ENCODE measurements at regions of chr3 and their contacts with region 1.

Region 1: DNA sequence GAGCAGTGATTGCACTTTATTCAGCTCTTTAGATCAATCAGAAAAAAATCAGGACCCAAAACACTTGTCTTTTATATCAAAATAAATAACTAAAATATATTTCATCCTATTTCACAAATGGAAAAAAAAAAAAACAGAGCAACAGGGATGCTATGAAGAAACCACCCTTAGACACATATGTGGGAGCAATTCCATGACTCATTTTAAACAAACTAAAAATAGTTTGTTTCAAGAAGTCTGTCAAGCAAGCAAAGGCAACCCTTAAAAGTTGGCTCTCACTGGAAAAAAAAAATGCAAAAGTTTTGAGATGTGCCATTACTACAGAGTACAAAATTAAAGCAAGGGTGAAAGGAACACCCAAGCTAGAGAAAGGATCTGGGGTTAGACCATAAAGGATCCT is 5.7 kb downstream of the ATP13A3 start:
- DNase-seq: no peak
- ATAC-seq: no peak
- H3K4me3 ChIP-seq: no peak overlapping the region
- H3K27ac ChIP-seq: no peak overlapping the region
- H3K4me1 ChIP-seq: peaks cover 20 to 30% of the 10 kb centered on the region in 2 donors
- H3K27me3 ChIP-seq: no peaks in the 10 kb centered on the region
- CTCF ChIP-seq: no peak
- POLR2A ChIP-seq: no peak

Region 2: DNA sequence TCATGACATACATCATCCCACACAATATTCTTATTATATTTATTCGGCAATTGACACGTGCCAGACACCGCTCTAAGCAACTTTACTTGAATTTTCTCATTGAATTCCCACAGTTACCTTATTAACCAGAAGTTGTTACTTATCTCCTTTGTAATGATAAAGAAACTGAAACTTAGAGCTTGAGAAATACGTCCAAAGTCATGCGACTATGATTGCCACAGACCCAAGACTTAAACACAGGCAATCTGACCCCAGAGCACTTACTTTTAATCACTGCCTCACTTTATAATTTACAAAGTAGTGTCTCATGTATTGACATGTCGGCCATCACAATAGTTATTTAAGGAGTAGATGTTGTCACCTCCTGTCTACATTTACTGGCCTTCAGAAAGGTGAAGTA is 991.2 kb before region 1 on chr3:
- in situ Hi-C with region 1: no loop called
- intact Hi-C with region 1: no loop called
- DNase-seq: no peak
- ATAC-seq: no peak
- H3K4me3 ChIP-seq: no peak overlapping the region
- H3K27ac ChIP-seq: no peak overlapping the region
- H3K4me1 ChIP-seq: no peaks in the 10 kb centered on the region
- H3K27me3 ChIP-seq: no peaks in the 10 kb centered on the region
- CTCF ChIP-seq: no peak
- POLR2A ChIP-seq: no peak

Region 3: GRCh38 chr3:194583604-194584318 is 102.7 kb after region 1 on chr3:
- in situ Hi-C with region 1: loop called in 2 of 4 experiments (anchors 5 kb)
- intact Hi-C with region 1: loop called (anchors 2 kb)
- DNase-seq: peak; percentile 84 to 90
- ATAC-seq: peak; percentile 96 to 97
- H3K4me3 ChIP-seq: peak overlapping the region; percentile 64 to 79 (median 71)
- H3K27ac ChIP-seq: peak overlapping the region; percentile 77 to 89 (median 82)
- H3K4me1 ChIP-seq: peaks cover 0 to 10% of the 10 kb centered on the region in 2 donors
- H3K27me3 ChIP-seq: no peaks in the 10 kb centered on the region
- CTCF ChIP-seq: no peak
- POLR2A ChIP-seq: peak; percentile 84 to 90

Region 4: DNA sequence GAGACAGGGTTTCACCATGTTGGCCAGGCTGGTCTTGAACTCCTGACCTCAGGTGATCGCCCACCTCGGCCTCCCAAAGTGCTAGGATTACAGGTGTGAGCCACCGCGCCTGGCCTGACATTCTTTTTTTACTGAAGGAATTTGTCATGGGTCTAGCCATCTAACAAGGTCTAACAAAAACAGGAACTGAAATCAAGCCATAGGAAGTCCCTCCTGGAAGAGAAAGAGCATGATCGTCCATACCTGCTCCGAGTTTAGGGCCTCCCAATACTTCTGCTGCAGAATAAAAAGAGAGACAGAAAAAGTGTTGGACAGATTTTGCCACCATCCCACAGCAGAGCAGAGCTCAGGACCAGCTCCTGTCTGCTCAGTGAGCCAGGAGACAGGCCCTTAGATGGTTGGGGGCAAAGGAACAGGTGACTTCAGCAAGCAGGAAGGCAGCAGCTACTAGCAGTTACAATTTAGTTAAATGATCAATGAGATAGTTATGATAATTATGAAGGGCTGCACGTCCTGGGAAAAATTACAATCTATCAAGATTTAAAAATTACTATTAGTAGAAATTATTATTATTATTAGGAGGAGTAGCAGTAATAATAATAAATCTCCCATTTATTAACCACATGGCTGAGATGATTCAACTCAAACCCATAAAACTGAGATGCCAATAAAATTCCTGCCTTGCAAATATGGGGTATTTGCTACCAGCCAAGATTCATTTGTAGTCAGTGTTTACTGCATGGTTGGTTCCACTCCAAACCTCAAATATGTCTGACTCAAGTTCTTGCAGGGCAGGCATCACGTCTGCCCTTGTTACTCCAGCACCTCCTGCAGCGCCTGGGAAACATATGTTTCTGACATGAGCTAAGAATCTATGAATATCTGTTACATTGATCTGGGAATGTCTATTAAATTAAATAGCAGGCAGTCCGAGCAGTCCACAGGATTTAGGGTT is 112.0 kb after region 1 on chr3:
- in situ Hi-C with region 1: loop called in 3 of 4 experiments (anchors 5 kb)
- intact Hi-C with region 1: no loop called
- DNase-seq: peak; percentile 34 to 39
- ATAC-seq: peak; percentile 82 to 87
- H3K4me3 ChIP-seq: no peak overlapping the region
- H3K27ac ChIP-seq: peak overlapping the region in 1 of 4 donors; percentile 27
- H3K4me1 ChIP-seq: peaks cover 0 to 3% of the 10 kb centered on the region in 2 donors
- H3K27me3 ChIP-seq: no peaks in the 10 kb centered on the region
- CTCF ChIP-seq: no peak
- POLR2A ChIP-seq: no peak

Measured in gastrocnemius medialis (tissue), 4 donors.